ENCODE measurements at regions of chr18 and their contacts with region 1.

Region 1: GRCh38 chr18:616380-616995 is 19.7 kb downstream of the CLUL1 start:
- DNase-seq: no peak
- ATAC-seq: peak; percentile 70 to 80

Region 2: GRCh38 chr18:286515-287310 is 329.8 kb before region 1 on chr18:
- intact Hi-C with region 1: loop called (anchors 1 to 5 kb)
- DNase-seq: no peak
- ATAC-seq: peak; percentile 44

Region 3: DNA sequence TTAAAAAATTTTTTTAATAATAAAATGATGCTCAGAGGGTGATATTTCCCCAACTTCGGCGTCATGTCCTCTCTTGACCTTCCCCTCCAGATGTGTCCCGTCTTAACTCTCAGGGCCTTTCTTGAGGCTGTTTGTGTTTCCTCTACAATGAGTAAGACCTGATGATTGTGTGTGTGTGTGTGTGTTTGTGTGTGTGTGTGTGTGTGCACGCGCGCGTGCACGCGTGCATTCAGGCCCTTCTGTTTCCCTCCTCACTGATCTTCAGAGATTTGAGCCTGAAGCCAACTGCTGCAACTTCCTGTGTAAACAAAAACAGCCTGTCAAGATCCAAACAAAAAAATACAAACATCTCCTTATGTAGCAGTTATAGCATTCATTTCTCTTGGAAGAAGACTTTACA is 60.4 kb before region 1 on chr18:
- intact Hi-C with region 1: no loop called
- DNase-seq: no peak
- ATAC-seq: no peak